ENCODE measurements at regions of chr9 and their contacts with region 1.

Region 1: DNA sequence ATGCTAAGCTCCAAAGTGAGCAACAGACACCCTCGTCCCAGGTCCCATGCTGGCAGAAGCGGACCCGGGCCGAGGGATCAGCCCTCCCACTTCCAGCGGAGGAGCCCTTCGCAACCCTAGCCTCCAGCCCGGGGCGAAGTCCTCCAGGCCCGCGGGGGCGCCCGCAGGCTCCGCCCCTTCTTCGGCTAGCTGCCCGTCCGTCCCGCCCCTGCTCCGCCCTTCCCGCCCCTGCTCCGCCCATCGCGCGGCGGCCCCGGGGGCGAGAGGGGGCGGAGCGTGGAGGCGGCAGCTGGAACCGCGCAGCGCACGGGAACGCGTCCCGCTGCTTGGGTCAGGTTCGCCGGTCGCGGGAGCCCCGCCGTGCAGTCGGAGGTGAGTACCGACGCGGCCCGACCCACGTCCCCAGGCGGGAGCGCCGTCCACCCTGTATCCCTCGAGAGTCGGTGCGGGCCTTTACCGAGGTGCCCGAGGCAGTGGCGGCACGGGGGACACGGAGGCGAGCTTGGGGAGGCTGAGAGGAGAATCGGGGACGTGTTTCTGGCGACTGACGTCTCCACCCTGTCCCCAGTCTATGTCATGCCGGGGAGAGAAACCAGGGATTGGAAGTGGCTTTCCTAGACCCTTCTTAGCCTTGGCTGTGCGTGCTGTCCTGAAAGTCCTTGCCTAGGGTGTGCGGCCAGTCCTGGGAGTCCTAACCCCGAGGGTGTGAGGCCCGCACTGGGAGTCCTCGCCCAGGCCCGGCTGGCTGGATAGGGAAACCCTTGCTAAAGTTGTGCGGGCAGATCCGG is at the start of gene ACO1:
- DNase-seq: peak; percentile 87
- H3K4me3 Mint-ChIP-seq: peak within 1 kb of the TSS; percentile 79
- H3K27ac Mint-ChIP-seq: no peak within 1 kb of the TSS
- H3K4me1 Mint-ChIP-seq: peaks cover 15% of the 10 kb centered on the region
- H3K27me3 Mint-ChIP-seq: peaks cover 5% of the 10 kb centered on the region
- total RNA-seq, gene ACO1: 13.1 to 13.7 TPM

Region 2: DNA sequence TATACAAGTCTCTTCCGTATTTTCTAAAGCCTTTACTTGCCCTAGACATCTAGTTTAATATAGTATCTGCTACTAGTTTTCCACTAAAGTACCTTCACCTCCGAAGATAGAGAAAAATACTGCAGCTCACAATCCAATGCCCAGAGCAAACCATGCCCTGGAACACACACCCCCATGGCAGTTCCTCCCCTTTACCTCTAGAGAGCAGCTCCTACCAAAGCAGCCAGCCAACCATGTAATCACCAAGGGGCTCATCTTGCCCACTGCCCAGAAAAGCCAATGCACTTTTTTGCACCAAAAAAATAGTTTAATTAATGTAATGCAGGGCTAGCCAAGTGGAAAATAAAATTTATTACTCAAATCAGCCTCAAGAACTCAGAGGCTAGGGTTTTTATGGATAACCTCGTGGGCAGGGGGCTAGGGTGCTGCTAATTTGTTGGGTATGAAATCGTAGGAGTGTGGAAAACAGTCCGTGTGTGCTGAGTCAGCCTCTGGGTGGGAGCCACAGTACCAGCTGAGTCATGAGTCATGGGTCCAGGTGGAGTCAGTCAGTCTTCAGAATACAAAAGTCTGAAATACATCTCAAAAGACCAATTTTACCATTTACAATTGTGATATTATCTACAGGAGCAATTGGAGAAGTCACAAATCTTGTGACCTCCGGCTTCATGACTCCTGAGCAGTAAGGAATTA is 120.2 kb before region 1 on chr9:
- CTCF ChIA-PET with region 1: no interaction called
- POLR2A ChIA-PET with region 1: no interaction called
- intact Hi-C with region 1: no loop called
- DNase-seq: no peak
- H3K4me3 Mint-ChIP-seq: no peak overlapping the region
- H3K27ac Mint-ChIP-seq: no peak overlapping the region
- H3K4me1 Mint-ChIP-seq: no peaks in the 10 kb centered on the region
- H3K27me3 Mint-ChIP-seq: peaks cover 8% of the 10 kb centered on the region

Region 3: GRCh38 chr9:32431940-32432555 is 47.5 kb after region 1 on chr9:
- CTCF ChIA-PET with region 1: interaction called, 54 read pairs
- POLR2A ChIA-PET with region 1: no interaction called
- intact Hi-C with region 1: loop called (anchors 1 kb)
- DNase-seq: peak; percentile 28
- H3K4me3 Mint-ChIP-seq: no peak overlapping the region
- H3K27ac Mint-ChIP-seq: no peak overlapping the region
- H3K4me1 Mint-ChIP-seq: no peaks in the 10 kb centered on the region
- H3K27me3 Mint-ChIP-seq: no peaks in the 10 kb centered on the region

Region 4: GRCh38 chr9:32526041-32526706 is 141.6 kb after region 1 on chr9 and contains the start of gene RIGI:
- CTCF ChIA-PET with region 1: interaction called, 37 read pairs
- POLR2A ChIA-PET with region 1: interaction called, 3 read pairs
- intact Hi-C with region 1: loop called (anchors 1 kb)
- DNase-seq: peak; percentile 89
- H3K4me3 Mint-ChIP-seq: peak within 1 kb of the TSS; percentile 82
- H3K27ac Mint-ChIP-seq: peak within 1 kb of the TSS; percentile 81
- H3K4me1 Mint-ChIP-seq: peaks cover 41% of the 10 kb centered on the region
- H3K27me3 Mint-ChIP-seq: no peaks in the 10 kb centered on the region
- total RNA-seq, gene RIGI: 10.6 to 11.7 TPM

Measured in activated CD4-positive, alpha-beta memory T cell treated with anti-CD3 and anti-CD28 coated beads for 36 hours (primary cell).